ENCODE measurements at regions of chr5 and their contacts with region 1.

Region 1: DNA sequence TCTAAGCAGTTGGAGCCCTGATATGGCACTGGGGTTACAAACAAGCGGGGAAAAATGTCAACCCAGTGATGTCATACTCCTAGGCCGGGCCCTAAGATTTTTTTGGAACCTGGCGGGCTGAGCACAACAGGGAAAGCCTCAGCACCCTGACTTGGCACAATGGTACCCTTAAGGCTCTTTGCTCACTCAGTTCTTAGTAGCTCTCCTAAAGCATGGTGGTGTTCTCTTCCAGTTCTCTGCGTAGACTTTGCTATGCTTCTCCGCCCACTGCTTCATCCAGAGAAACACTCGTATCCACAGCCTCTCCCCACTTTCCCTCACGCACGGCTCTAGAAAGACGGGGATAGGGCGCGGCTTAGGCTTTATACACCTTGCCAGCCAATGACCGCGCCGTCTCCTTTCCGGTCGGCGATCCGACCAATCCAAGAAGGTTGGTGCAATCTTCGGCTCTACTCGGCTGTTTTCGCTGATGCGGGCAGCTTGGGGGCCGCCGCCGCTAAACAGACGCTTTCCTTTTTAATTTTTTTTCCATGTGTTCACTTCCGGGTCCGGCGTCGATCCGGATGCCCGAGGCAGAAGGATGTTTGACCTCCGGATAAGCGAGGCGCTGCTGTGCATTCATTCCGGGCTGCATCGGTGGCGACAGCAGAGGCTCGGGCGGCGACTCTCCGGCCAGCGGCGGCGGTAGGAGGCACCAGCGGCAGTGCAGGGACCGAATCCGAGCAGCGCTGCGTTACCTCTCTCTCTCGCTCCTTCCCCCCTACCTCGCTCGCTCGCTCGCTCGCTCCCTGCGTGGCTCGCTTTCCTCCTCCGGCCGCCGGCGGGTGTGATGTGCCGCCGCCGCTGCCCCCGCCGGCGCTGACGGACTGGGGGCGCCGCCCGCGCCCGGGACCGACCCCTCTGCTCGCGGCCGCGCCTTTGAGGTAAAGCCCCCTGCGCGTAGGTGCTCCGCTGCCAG is at the start of gene CSNK1G3:
- DNase-seq: peak; percentile 98
- H3K4me3 Mint-ChIP-seq: peak within 1 kb of the TSS; percentile 97
- H3K27ac Mint-ChIP-seq: peak within 1 kb of the TSS; percentile 97
- H3K4me1 Mint-ChIP-seq: peaks cover 40% of the 10 kb centered on the region
- H3K27me3 Mint-ChIP-seq: peaks cover 5% of the 10 kb centered on the region
- total RNA-seq, gene CSNK1G3: 31.9 to 33.8 TPM

Region 2: GRCh38 chr5:122845229-122846050 is 666.5 kb before region 1 on chr5 and contains the start of gene SNX24:
- CTCF ChIA-PET with region 1: no interaction called
- intact Hi-C with region 1: loop called (anchors 5 kb)
- DNase-seq: peak; percentile 70
- H3K4me3 Mint-ChIP-seq: peak within 1 kb of the TSS; percentile 79
- H3K27ac Mint-ChIP-seq: no peak within 1 kb of the TSS
- H3K4me1 Mint-ChIP-seq: peaks cover 16% of the 10 kb centered on the region
- H3K27me3 Mint-ChIP-seq: peaks cover 5% of the 10 kb centered on the region
- total RNA-seq, gene SNX24: 2.2 to 2.3 TPM

Region 3: DNA sequence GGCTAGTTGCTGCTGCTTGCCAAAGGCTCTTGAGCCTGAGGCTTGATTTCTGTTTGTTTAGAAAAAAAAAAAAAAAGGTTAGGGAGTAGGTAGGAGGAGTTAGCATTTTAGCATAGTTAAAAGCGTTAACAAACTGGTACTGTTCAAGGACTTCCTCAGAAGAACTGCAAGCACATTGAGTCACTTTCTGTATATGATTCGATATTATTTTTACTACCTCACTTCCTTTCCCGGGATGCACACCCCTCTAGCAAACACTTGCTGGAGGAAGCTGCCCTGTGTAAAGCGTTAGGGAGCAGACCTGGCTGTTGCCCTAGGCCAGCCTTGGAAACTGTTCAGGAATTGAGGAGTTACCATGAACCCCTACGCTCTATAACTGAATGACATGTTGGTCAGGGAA is 73.0 kb before region 1 on chr5:
- CTCF ChIA-PET with region 1: no interaction called
- intact Hi-C with region 1: loop called (anchors 1 kb)
- DNase-seq: peak; percentile 57
- H3K4me3 Mint-ChIP-seq: no peak overlapping the region
- H3K27ac Mint-ChIP-seq: peak overlapping the region; percentile 68
- H3K4me1 Mint-ChIP-seq: peaks cover 26% of the 10 kb centered on the region
- H3K27me3 Mint-ChIP-seq: no peaks in the 10 kb centered on the region

Region 4: DNA sequence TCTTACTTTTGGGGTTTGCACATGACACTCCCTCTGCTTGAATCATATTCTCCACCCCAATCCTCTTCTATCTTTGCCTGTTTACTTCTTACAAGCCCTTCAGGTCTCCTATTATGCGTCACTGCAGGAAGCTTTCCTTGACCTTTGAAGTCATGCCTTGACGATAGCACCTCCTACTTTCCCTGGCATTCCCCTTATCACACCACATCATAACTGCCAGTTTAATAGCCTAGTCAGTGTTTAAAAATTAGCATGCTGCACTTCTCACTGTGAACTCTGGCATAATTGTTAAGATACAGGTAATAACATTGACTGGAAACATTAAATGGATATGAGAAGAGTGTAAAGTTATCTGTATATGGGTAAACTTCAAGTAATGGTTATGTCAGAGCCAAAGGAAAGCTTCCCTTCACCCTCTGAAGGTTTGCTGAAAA is 51.6 kb before region 1 on chr5:
- CTCF ChIA-PET with region 1: no interaction called
- intact Hi-C with region 1: loop called (anchors 1 kb)
- DNase-seq: peak; percentile 81
- H3K4me3 Mint-ChIP-seq: peak overlapping the region; percentile 10
- H3K27ac Mint-ChIP-seq: peak overlapping the region; percentile 90
- H3K4me1 Mint-ChIP-seq: peaks cover 20% of the 10 kb centered on the region
- H3K27me3 Mint-ChIP-seq: no peaks in the 10 kb centered on the region

Region 5: GRCh38 chr5:123545506-123545905 is 33.6 kb after region 1 on chr5:
- CTCF ChIA-PET with region 1: interaction called, 3 read pairs
- intact Hi-C with region 1: loop called (anchors 1 kb)
- DNase-seq: peak; percentile 57
- H3K4me3 Mint-ChIP-seq: no peak overlapping the region
- H3K27ac Mint-ChIP-seq: no peak overlapping the region
- H3K4me1 Mint-ChIP-seq: peaks cover 45% of the 10 kb centered on the region
- H3K27me3 Mint-ChIP-seq: no peaks in the 10 kb centered on the region

Measured in activated naive CD4-positive, alpha-beta T cell treated with anti-CD3 and anti-CD28 coated beads for 36 hours (primary cell).